ENCODE measurements at regions of chr1 and their contacts with region 1.

Region 1: GRCh38 chr1:50929376-50929958 is 30.6 kb downstream of the FAF1 start:
- DNase-seq: no peak
- ATAC-seq: no peak
- H3K4me3 Mint-ChIP-seq: no peak overlapping the region
- H3K27ac Mint-ChIP-seq: no peak overlapping the region
- H3K4me1 Mint-ChIP-seq: peaks cover 39% of the 10 kb centered on the region
- H3K27me3 Mint-ChIP-seq: no peaks in the 10 kb centered on the region
- CTCF ChIP-seq: peak; percentile 70

Region 2: GRCh38 chr1:50917138-50918137 is 12.0 kb before region 1 on chr1:
- CTCF ChIA-PET with region 1: interaction called, 11 read pairs
- POLR2A ChIA-PET with region 1: no interaction called
- intact Hi-C with region 1: no loop called
- DNase-seq: no peak
- ATAC-seq: no peak
- H3K4me3 Mint-ChIP-seq: no peak overlapping the region
- H3K27ac Mint-ChIP-seq: no peak overlapping the region
- H3K4me1 Mint-ChIP-seq: peaks cover 23% of the 10 kb centered on the region
- H3K27me3 Mint-ChIP-seq: no peaks in the 10 kb centered on the region
- CTCF ChIP-seq: no peak

Region 3: DNA sequence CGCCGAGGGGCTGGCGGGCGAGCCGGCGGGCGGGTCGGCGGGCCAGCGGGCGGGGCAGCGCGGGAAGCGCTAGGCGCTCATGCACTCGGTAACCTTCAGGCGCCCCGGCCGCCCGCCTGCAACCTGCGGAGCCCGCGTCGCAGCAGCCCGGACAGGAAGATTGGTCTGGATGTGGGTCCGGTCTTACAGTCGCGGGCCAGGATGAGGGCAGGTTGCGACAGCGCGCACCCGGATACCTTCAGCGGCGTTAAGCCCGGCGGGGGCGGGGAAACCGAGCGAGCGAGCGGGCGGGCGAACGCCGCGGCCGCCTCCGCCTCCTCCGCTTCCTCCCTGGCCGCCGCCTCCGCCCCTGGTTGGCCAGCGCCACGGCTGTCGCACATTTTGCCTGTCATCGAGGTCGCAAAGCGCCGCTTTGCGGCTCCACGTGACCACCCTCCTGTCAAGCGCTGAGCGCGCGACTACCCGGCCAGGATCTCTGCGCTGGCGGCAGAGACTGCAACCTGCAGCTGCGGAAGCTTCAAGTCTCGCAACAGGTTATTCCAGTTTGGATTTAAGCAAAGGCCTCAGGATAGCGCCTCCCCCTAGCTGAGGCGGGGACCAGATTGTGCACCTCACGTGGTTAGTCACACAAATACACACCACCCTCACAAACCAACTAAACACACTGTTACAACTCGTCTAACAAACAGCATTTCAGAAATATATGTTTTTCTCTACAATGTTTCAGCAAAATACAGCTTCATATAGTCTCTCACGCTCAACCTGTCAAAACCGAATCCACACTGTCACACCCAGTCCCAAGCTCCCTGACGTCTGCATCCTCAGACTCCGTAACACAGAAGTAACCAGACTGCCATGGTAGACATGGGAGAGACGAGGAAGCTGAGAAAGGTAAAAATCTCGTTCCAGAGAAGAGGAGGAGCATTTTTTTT is 30.7 kb after region 1 on chr1 and contains the start of gene FAF1:
- CTCF ChIA-PET with region 1: interaction called, 17 read pairs
- POLR2A ChIA-PET with region 1: interaction called, 3 read pairs
- intact Hi-C with region 1: no loop called
- DNase-seq: peak; percentile 96
- ATAC-seq: peak; percentile 89
- H3K4me3 Mint-ChIP-seq: peak within 1 kb of the TSS; percentile 88
- H3K27ac Mint-ChIP-seq: peak within 1 kb of the TSS; percentile 91
- H3K4me1 Mint-ChIP-seq: peaks cover 21% of the 10 kb centered on the region
- H3K27me3 Mint-ChIP-seq: no peaks in the 10 kb centered on the region
- CTCF ChIP-seq: peak; percentile 23
- total RNA-seq, gene FAF1: 82.2 to 87.0 TPM

Region 4: DNA sequence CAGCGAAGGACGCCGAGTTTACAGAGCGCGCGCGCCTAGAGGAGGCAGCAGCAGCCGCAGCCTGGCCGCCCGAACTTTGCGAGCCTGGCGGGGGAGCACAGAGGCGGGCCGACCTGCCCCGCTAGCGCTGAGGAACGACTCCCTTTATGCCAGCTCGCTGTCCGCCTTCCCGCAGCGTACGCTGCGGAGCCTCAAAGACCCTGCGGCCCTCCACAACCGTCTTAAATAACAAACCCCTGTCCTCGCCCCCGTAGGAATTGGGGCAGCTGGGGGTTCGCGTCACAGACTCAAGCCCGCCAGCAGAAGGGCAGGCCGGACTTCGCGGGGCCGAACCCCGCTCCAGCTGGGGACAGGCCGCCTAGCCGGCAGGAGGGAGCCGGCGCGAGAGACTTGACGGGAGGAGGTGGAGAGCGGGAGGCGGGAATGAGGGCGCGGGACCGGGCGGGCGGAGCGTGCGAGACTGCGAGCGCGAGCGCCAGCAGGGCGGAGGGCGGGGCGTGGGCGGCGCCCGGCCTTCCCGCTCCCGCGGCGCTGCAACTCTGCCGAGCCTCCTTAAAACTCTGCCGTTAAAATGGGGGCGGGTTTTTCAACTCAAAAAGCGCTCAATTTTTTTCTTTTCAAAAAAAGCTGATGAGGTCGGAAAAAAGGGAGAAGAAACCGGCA is 38.8 kb after region 1 on chr1:
- CTCF ChIA-PET with region 1: interaction called, 14 read pairs
- POLR2A ChIA-PET with region 1: interaction called, 3 read pairs
- intact Hi-C with region 1: no loop called
- DNase-seq: peak; percentile 82
- ATAC-seq: peak; percentile 80
- H3K4me3 Mint-ChIP-seq: peak overlapping the region; percentile 88
- H3K27ac Mint-ChIP-seq: peak overlapping the region; percentile 96
- H3K4me1 Mint-ChIP-seq: peaks cover 21% of the 10 kb centered on the region
- H3K27me3 Mint-ChIP-seq: peaks cover 1% of the 10 kb centered on the region
- CTCF ChIP-seq: peak; percentile 5

Region 5: DNA sequence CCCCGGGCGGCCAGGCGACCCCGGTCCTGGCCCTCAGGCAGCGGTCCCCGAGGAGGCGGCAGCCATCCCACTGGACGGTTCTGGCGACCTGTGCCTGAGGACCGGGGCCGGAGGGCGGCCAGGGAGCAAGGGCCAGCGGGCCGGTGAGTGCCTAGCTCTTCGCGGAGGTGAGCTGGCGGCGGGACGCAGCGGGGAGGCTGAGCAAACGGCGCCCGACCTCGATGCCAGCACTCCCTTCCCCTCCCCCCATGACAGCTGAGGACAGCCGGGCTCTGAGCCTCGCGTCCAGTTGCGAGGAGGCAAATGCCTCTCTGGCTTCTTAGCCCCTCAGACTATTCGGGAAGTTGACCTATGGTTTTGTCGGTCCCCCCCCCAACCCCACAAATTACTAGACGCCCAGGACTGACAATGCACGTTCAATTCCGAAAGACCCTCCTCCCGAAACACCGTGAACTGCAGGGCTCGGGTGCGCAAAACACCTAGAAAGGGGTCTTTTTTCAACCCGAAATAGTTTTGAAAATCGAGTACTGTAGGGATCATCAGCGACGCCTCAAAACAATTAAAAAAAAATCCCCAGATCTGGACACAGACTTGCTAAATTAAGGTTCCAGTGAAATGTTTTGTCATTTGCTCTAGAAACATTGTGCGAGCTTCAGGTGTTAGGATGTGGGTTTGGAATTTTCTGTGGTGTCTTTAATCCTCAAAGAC is 48.8 kb after region 1 on chr1:
- CTCF ChIA-PET with region 1: interaction called, 11 read pairs
- POLR2A ChIA-PET with region 1: interaction called, 3 read pairs
- intact Hi-C with region 1: no loop called
- DNase-seq: peak; percentile 53
- ATAC-seq: peak; percentile 61
- H3K4me3 Mint-ChIP-seq: peak overlapping the region; percentile 78
- H3K27ac Mint-ChIP-seq: peak overlapping the region; percentile 63
- H3K4me1 Mint-ChIP-seq: peaks cover 21% of the 10 kb centered on the region
- H3K27me3 Mint-ChIP-seq: peaks cover 19% of the 10 kb centered on the region
- CTCF ChIP-seq: no peak

Region 6: DNA sequence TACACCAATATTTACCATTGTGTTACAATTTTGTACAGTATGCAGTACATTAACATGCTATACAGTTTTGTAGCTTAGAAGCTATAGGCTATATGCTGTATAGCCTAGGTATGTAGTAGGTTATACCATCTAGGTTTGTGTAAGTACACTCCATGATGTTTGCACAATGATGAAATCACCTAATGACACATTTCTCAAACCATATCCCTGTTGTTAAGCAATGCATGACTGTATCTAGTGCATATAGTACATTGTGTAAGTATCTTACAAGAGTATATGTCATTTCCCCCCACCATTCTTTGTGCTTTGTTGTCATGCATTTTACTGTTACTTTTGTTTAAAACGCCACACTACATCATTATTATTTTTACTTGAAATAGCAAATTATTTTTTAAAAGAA is 240.9 kb after region 1 on chr1:
- CTCF ChIA-PET with region 1: no interaction called
- POLR2A ChIA-PET with region 1: no interaction called
- intact Hi-C with region 1: no loop called
- DNase-seq: no peak
- ATAC-seq: no peak
- H3K4me3 Mint-ChIP-seq: no peak overlapping the region
- H3K27ac Mint-ChIP-seq: no peak overlapping the region
- H3K4me1 Mint-ChIP-seq: peaks cover 11% of the 10 kb centered on the region
- H3K27me3 Mint-ChIP-seq: peaks cover 12% of the 10 kb centered on the region
- CTCF ChIP-seq: no peak